ENCODE measurements at regions of chr1 and their contacts with region 1.

Region 1: GRCh38 chr1:108828022-108828961 is 28.6 kb downstream of the AKNAD1 start:
- DNase-seq: peak; percentile 73 to 74
- H3K4me3 ChIP-seq: no peak overlapping the region
- H3K4me3 Mint-ChIP-seq: no peak overlapping the region
- H3K27ac Mint-ChIP-seq: no peak overlapping the region
- H3K4me1 ChIP-seq: peaks cover 10% of the 10 kb centered on the region; the same call in 1 of the 2 replicates
- H3K4me1 Mint-ChIP-seq: no peaks in the 10 kb centered on the region
- H3K27me3 ChIP-seq: no peaks in the 10 kb centered on the region
- H3K27me3 Mint-ChIP-seq: no peaks in the 10 kb centered on the region
- CTCF ChIP-seq: peak; percentile 60 to 61

Region 2: GRCh38 chr1:108661030-108661620 is 167.2 kb before region 1 on chr1 and contains the start of gene HENMT1:
- CTCF ChIA-PET with region 1: no interaction called
- POLR2A ChIA-PET with region 1: no interaction called
- intact Hi-C with region 1: no loop called
- DNase-seq: peak; percentile 67 to 68
- H3K4me3 ChIP-seq: peak within 1 kb of the TSS; percentile 41
- H3K4me3 Mint-ChIP-seq: peak within 1 kb of the TSS; percentile 80
- H3K27ac Mint-ChIP-seq: peak within 1 kb of the TSS; percentile 91
- H3K4me1 ChIP-seq: no peaks in the 10 kb centered on the region
- H3K4me1 Mint-ChIP-seq: peaks cover 7% of the 10 kb centered on the region
- H3K27me3 ChIP-seq: no peaks in the 10 kb centered on the region
- H3K27me3 Mint-ChIP-seq: no peaks in the 10 kb centered on the region
- CTCF ChIP-seq: no peak
- total RNA-seq, gene HENMT1: 18.7 and 21.0 TPM in 2 replicates

Region 3: GRCh38 chr1:108732398-108732797 is 95.9 kb before region 1 on chr1:
- CTCF ChIA-PET with region 1: no interaction called
- POLR2A ChIA-PET with region 1: no interaction called
- intact Hi-C with region 1: no loop called
- DNase-seq: no peak
- H3K4me3 ChIP-seq: no peak overlapping the region
- H3K4me3 Mint-ChIP-seq: no peak overlapping the region
- H3K27ac Mint-ChIP-seq: peak overlapping the region; percentile 87
- H3K4me1 ChIP-seq: no peaks in the 10 kb centered on the region
- H3K4me1 Mint-ChIP-seq: no peaks in the 10 kb centered on the region
- H3K27me3 ChIP-seq: no peaks in the 10 kb centered on the region
- H3K27me3 Mint-ChIP-seq: no peaks in the 10 kb centered on the region
- CTCF ChIP-seq: no peak

Region 4: DNA sequence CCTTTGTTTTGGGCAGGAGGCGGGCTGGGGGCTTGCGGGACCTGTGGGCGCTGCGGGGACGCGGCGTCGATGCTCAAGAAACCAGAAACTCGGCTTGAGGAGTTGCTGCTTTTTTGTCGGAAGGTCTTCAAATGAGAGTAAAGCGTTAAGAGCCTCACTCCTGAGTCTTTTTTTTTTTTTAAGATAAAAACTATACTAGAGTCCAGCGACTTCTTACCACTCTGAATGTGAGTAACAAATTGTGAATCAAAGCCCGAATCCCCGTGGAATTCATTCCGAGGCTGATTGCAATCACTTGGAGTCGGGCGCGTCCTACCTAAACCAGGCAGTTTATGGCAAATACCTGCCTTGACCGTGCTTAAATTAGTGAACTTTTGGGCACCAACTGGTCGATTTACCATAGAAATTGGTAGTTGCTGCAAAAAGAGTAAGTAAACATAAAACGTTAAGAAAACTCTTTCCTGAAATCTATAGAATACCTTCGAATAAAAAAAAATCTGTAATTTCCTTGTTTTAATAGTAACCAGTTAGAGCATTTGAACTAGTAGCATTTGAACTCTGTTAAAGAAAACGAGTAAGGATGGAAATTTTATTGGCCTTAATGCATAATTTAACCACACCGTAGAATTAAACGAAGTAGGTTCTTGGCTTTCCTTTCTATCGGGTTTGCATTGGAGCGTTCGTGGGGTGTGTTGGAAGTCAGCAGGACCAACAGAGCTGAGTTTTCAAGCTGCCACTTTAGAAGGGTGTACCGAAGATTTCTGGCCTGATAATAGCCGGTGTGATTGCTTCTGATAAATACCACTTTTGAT is 49.3 kb after region 1 on chr1:
- CTCF ChIA-PET with region 1: interaction called, 10 read pairs
- POLR2A ChIA-PET with region 1: no interaction called
- intact Hi-C with region 1: loop called (anchors 5 kb)
- DNase-seq: no peak
- H3K4me3 ChIP-seq: peak overlapping the region; percentile 68
- H3K4me3 Mint-ChIP-seq: peak overlapping the region; percentile 77
- H3K27ac Mint-ChIP-seq: peak overlapping the region; percentile 50
- H3K4me1 ChIP-seq: peaks cover 5% of the 10 kb centered on the region; the same call in 1 of the 2 replicates
- H3K4me1 Mint-ChIP-seq: no peaks in the 10 kb centered on the region
- H3K27me3 ChIP-seq: no peaks in the 10 kb centered on the region
- H3K27me3 Mint-ChIP-seq: no peaks in the 10 kb centered on the region
- CTCF ChIP-seq: no peak

Region 5: GRCh38 chr1:108897865-108898720 is 69.8 kb after region 1 on chr1:
- CTCF ChIA-PET with region 1: interaction called, 6 read pairs
- POLR2A ChIA-PET with region 1: no interaction called
- intact Hi-C with region 1: loop called (anchors 1 kb)
- DNase-seq: peak in 1 of 2 experiments; percentile 15
- H3K4me3 ChIP-seq: no peak overlapping the region
- H3K4me3 Mint-ChIP-seq: no peak overlapping the region
- H3K27ac Mint-ChIP-seq: no peak overlapping the region
- H3K4me1 ChIP-seq: no peaks in the 10 kb centered on the region; the same call in 1 of the 2 replicates
- H3K4me1 Mint-ChIP-seq: no peaks in the 10 kb centered on the region
- H3K27me3 ChIP-seq: no peaks in the 10 kb centered on the region
- H3K27me3 Mint-ChIP-seq: no peaks in the 10 kb centered on the region
- CTCF ChIP-seq: peak; percentile 28 to 57

Region 6: GRCh38 chr1:109050266-109050995 is 222.1 kb after region 1 on chr1:
- CTCF ChIA-PET with region 1: no interaction called
- POLR2A ChIA-PET with region 1: no interaction called
- intact Hi-C with region 1: no loop called
- DNase-seq: no peak
- H3K4me3 ChIP-seq: no peak overlapping the region
- H3K4me3 Mint-ChIP-seq: no peak overlapping the region
- H3K27ac Mint-ChIP-seq: no peak overlapping the region
- H3K4me1 ChIP-seq: no peaks in the 10 kb centered on the region
- H3K4me1 Mint-ChIP-seq: no peaks in the 10 kb centered on the region
- H3K27me3 ChIP-seq: no peaks in the 10 kb centered on the region
- H3K27me3 Mint-ChIP-seq: no peaks in the 10 kb centered on the region
- CTCF ChIP-seq: no peak

Region 7: GRCh38 chr1:109090196-109091077 is 262.1 kb after region 1 on chr1 and contains the start of gene TMEM167B:
- CTCF ChIA-PET with region 1: no interaction called
- POLR2A ChIA-PET with region 1: no interaction called
- intact Hi-C with region 1: no loop called
- DNase-seq: peak; percentile 85 to 92
- H3K4me3 ChIP-seq: peak within 1 kb of the TSS; percentile 48
- H3K4me3 Mint-ChIP-seq: peak within 1 kb of the TSS; percentile 96
- H3K27ac Mint-ChIP-seq: peak within 1 kb of the TSS; percentile 94
- H3K4me1 ChIP-seq: no peaks in the 10 kb centered on the region
- H3K4me1 Mint-ChIP-seq: peaks cover 6% of the 10 kb centered on the region
- H3K27me3 ChIP-seq: no peaks in the 10 kb centered on the region
- H3K27me3 Mint-ChIP-seq: no peaks in the 10 kb centered on the region
- CTCF ChIP-seq: no peak
- total RNA-seq, gene TMEM167B: 21.8 and 23.5 TPM in 2 replicates

Measured in Caco-2 (cell line).